A549 (cell line): ENCODE measurements at regions of chr17 and their contacts with region 1.

Region 1: GRCh38 chr17:54992797-54993639 is 24.5 kb downstream of the STXBP4 start:
- DNase-seq: peak; percentile 49 to 71
- ATAC-seq: peak; percentile 80 to 90; a peak in 5 of 6 replicates
- H3K4me3 ChIP-seq: no peak overlapping the region
- H3K27ac ChIP-seq: no peak overlapping the region
- H3K4me1 ChIP-seq: no peaks in the 10 kb centered on the region
- CTCF ChIP-seq: peak; percentile 86
- EP300 ChIP-seq: no peak
- POLR2A ChIP-seq: no peak
- RAD21 ChIP-seq: peak; percentile 82 to 86

Region 2: DNA sequence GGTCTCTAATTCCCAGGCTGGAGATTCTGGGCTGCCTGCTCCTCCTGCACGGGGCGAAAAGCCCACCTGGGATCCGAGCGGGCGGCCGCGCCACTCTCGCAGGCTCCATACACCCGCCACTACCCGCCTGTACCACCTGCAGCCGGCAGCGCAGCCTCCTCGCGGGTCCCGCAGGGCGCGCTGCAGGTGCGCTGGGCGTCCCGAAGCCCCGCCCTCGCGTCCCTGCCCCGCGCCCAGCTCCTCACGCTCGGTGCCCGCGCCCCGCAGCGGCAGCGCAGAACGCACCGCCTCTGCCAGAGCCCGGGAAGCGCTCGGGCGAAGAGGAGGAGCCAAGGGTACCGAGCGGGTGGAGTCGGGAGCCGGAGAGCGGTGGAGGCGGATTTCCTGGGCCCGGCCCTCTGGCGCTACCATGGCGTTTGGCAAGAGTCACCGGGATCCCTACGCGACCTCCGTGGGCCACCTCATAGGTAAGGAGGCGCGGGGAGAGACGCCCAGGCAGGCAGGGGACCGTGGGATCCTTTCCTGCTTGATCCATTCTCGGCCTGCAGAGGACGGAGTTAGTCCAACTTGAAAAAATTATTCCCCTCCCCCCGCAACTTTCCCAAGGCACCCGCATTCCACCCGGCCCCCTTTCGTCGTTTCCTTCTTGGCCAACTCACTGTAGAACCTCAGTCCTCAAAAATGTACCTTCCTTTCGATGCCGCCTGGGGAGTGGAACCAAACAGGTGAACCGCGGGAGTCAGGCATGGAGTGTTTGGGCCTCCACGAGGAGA is 92.4 kb before region 1 on chr17 and contains the start of gene TOM1L1:
- CTCF ChIA-PET with region 1: no interaction called
- POLR2A ChIA-PET with region 1: no interaction called
- DNase-seq: peak; percentile 85 to 89
- ATAC-seq: peak; percentile 95 to 98
- H3K4me3 ChIP-seq: peak within 1 kb of the TSS; percentile 90
- H3K27ac ChIP-seq: peak within 1 kb of the TSS; percentile 87 to 91; a peak in 5 of 6 replicates
- H3K4me1 ChIP-seq: peaks cover 4% of the 10 kb centered on the region; the same call in 2 of the 3 replicates
- CTCF ChIP-seq: no peak
- EP300 ChIP-seq: no peak
- POLR2A ChIP-seq: peak; percentile 51
- RAD21 ChIP-seq: no peak; a peak in 1 of 5 replicates
- polyA plus RNA-seq, gene TOM1L1: 111 and 117 TPM in 2 replicates

Region 3: DNA sequence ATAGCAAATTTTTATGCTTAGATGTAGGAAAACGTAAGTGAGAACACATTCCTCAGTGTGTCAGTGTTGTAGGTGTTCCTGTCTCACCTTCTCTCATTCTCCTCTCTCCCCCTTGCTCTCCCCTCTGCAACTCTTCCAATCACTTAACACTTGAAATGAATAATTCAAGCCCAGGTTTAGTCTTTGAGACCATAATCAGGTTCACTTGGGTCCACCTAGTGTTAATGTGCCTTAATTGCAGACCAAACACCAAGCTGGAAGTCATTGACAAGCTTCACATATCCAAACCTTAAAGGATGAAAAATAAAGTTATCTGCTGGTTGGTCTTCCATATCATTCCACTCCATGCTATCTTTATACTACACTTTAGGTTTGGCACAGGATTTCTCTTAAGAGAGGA is 12.5 kb after region 1 on chr17:
- CTCF ChIA-PET with region 1: interaction called, 48 read pairs
- POLR2A ChIA-PET with region 1: interaction called, 3 read pairs
- DNase-seq: peak in 1 of 2 experiments; percentile 58
- ATAC-seq: peak; percentile 66 to 85
- H3K4me3 ChIP-seq: no peak overlapping the region
- H3K27ac ChIP-seq: no peak overlapping the region
- H3K4me1 ChIP-seq: no peaks in the 10 kb centered on the region
- CTCF ChIP-seq: peak; percentile 45
- EP300 ChIP-seq: no peak
- POLR2A ChIP-seq: no peak
- RAD21 ChIP-seq: peak; percentile 21 to 24; a peak in 2 of 5 replicates

Region 4: DNA sequence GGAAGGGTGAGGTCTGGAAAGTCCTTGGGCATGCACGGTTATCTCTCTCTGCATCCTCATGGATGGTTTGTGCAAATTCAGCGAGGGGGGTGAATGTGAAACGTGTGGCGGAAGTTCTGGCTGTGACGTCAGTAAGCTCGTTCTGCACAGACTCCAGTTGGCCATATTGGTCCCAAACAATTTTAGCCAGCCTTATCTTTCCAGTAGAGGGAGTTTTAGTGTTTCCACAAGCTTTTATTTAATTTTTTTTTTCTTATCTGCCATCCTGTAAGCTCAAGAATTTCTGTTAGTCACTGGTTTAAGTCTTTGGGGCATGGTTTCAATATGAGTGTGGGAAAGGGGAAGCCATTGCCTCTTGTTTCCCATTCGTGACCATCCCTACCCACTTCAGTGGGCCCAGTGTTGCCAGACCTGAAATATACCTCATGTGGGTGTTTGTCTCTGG is 310.7 kb after region 1 on chr17:
- CTCF ChIA-PET with region 1: interaction called, 47 read pairs
- POLR2A ChIA-PET with region 1: no interaction called
- DNase-seq: no peak
- ATAC-seq: peak in 1 of 2 experiments; percentile 41; a peak in 3 of 6 replicates
- H3K4me3 ChIP-seq: no peak overlapping the region
- H3K27ac ChIP-seq: no peak overlapping the region
- H3K4me1 ChIP-seq: no peaks in the 10 kb centered on the region; the same call in 2 of the 3 replicates
- CTCF ChIP-seq: 0 out of 3 replicates have a peak, but pooled peaks have one; percentile 10
- EP300 ChIP-seq: no peak
- POLR2A ChIP-seq: no peak
- RAD21 ChIP-seq: no peak; a peak in 1 of 5 replicates

Region 5: GRCh38 chr17:55356434-55357328 is 363.7 kb after region 1 on chr17:
- CTCF ChIA-PET with region 1: interaction called, 99 read pairs
- POLR2A ChIA-PET with region 1: no interaction called
- DNase-seq: peak; percentile 86 to 88
- ATAC-seq: peak; percentile 100
- H3K4me3 ChIP-seq: no peak overlapping the region
- H3K27ac ChIP-seq: peak overlapping the region; percentile 29 to 33; a peak in 3 of 6 replicates
- H3K4me1 ChIP-seq: no peaks in the 10 kb centered on the region
- CTCF ChIP-seq: peak; percentile 82
- EP300 ChIP-seq: no peak
- POLR2A ChIP-seq: no peak
- RAD21 ChIP-seq: peak; percentile 78 to 81